K562 (cell line): ENCODE measurements at regions of chr3 and their contacts with region 1.

Region 1: DNA sequence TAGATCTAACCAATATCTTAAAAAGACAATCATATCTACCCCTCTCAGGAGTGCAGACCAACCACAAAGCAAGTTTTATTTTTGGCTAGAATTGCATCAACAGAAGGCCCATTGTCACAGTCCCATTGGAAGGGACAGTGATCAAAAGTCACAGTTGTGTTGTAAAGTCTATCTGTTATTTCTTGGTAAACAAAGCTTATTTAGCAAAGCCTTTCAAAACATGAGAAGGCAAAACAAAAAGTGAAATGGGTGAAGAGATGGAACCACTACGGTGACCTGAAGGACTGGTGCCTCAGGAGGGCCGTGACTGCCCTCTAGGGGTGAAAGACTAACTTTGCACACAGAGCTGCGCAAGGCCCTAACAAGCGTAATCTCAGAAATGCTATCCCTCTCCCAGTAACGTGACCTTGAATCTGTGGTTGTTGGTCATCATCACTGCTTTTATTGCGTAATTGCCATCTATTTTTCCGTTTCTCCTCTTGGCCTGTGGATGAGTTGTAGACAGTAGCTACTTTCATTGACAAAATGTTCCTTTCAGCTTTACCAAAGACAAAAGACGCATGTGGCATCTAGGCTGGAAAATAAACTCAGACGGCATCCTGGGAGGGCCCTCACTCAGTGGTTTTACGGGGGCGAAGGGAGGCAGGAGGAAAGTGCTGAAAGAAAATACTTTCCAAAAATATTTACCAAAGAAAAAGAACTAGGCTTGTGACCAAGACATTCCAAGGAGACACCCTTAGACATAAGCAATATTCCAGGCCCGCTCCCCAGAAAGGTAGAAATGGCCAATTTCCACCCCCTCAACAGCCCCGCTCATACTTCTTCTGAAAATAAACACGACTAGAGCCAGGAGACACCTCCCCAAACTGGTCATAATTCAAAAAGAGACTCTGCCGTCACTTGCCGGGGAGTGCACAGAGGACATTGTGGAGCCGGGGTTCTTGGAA is 79.4 kb downstream of the FRMD4B start:
- DNase-seq: peak; percentile 42 to 70 (median 67)
- ATAC-seq: peak; percentile 97
- H3K4me3 ChIP-seq: no peak overlapping the region
- H3K27ac ChIP-seq: no peak overlapping the region
- H3K4me1 ChIP-seq: no peaks in the 10 kb centered on the region
- H3K27me3 ChIP-seq: peaks cover 3 to 5% of the 10 kb centered on the region in 2 experiments; a peak in 2 of 5 replicates
- CTCF ChIP-seq: peak; percentile 70 to 81 (median 78)
- EP300 ChIP-seq: no peak
- POLR2A ChIP-seq: no peak
- RAD21 ChIP-seq: peak; percentile 83 to 85

Region 2: DNA sequence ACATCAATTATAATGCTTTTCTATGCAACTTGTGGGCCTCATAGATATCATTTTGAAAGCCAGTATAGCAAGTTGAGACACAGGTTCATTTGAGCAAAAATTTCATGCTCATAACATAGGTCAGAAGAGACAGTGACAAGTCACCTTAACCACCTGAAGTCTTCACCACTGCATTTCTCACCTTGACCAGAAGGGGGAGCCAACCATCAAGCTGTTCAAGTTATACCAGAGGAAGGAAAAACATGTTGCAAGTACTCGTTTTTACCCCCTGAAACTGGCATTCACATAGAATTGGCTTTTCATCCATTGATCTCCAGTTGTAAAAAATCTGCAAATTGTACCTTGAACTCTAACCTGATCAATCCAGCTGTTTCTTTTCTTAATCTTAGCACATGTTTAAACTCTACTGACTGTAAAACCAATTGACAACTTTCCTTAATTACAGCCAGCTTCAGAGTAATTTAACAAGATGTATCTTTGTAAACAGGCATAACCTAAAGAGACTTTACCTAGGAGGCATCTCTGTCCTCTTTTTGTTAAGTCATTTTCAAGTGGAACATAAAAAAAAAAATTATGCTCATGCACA is 185.5 kb before region 1 on chr3:
- CTCF ChIA-PET with region 1: interaction called, 5 read pairs
- POLR2A ChIA-PET with region 1: no interaction called
- in situ Hi-C with region 1: no loop called
- intact Hi-C with region 1: loop called (anchors 2 kb)
- DNase-seq: peak; percentile 37 to 80 (median 47)
- ATAC-seq: peak; percentile 81
- H3K4me3 ChIP-seq: no peak overlapping the region
- H3K27ac ChIP-seq: no peak overlapping the region
- H3K4me1 ChIP-seq: no peaks in the 10 kb centered on the region; a peak in 1 of 5 replicates
- H3K27me3 ChIP-seq: no peaks in the 10 kb centered on the region
- CTCF ChIP-seq: peak; percentile 61 to 77 (median 75)
- EP300 ChIP-seq: no peak
- POLR2A ChIP-seq: no peak
- RAD21 ChIP-seq: peak; percentile 72 to 82

Region 3: DNA sequence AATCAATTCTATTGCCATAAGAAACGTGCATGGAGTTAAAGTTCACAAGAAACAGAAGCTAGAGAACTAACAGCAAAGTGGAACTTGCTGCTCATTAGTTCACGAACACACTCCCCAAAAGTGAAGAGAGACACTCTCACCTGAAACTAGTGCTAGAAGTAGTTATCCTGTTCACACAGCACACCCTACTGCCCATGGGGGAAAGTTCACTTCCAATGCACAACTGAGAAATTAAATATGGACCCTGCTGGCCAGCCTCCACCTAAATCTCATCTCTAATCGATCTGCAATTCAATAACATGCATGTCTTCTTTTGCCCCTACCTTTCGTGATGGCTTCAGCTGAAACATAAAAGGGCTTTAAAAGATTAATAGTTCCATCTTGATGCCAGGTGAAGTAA is 118.7 kb after region 1 on chr3:
- CTCF ChIA-PET with region 1: no interaction called
- POLR2A ChIA-PET with region 1: no interaction called
- in situ Hi-C with region 1: no loop called
- intact Hi-C with region 1: loop called (anchors 5 kb)
- DNase-seq: peak in 3 of 4 experiments; percentile 4 to 18 (median 13)
- ATAC-seq: peak; percentile 76
- H3K4me3 ChIP-seq: no peak overlapping the region
- H3K27ac ChIP-seq: no peak overlapping the region
- H3K4me1 ChIP-seq: no peaks in the 10 kb centered on the region
- H3K27me3 ChIP-seq: peaks cover 0 to 5% of the 10 kb centered on the region in 2 experiments; a peak in 2 of 5 replicates
- CTCF ChIP-seq: peak; percentile 43 to 58 (median 55); a peak in 5 of 6 replicates
- EP300 ChIP-seq: no peak
- POLR2A ChIP-seq: no peak
- RAD21 ChIP-seq: peak; percentile 27 to 60; a peak in 3 of 4 replicates

Region 4: GRCh38 chr3:69671082-69671952 is 364.8 kb after region 1 on chr3:
- CTCF ChIA-PET with region 1: no interaction called
- POLR2A ChIA-PET with region 1: no interaction called
- in situ Hi-C with region 1: no loop called
- intact Hi-C with region 1: loop called (anchors 5 kb)
- DNase-seq: peak; percentile 22 to 50 (median 35)
- ATAC-seq: peak; percentile 56; the same call in 2 of the 3 replicates
- H3K4me3 ChIP-seq: no peak overlapping the region
- H3K27ac ChIP-seq: no peak overlapping the region
- H3K4me1 ChIP-seq: no peaks in the 10 kb centered on the region; a peak in 1 of 5 replicates
- H3K27me3 ChIP-seq: no peaks in the 10 kb centered on the region
- CTCF ChIP-seq: peak; percentile 29 to 77 (median 50); a peak in 5 of 6 replicates
- EP300 ChIP-seq: no peak
- POLR2A ChIP-seq: no peak
- RAD21 ChIP-seq: peak; percentile 73 to 75

Region 5: GRCh38 chr3:70249509-70250160 is 943.1 kb after region 1 on chr3:
- CTCF ChIA-PET with region 1: no interaction called
- POLR2A ChIA-PET with region 1: no interaction called
- in situ Hi-C with region 1: no loop called
- intact Hi-C with region 1: no loop called
- DNase-seq: no peak
- ATAC-seq: no peak
- H3K4me3 ChIP-seq: no peak overlapping the region
- H3K27ac ChIP-seq: no peak overlapping the region
- H3K4me1 ChIP-seq: no peaks in the 10 kb centered on the region
- H3K27me3 ChIP-seq: no peaks in the 10 kb centered on the region
- CTCF ChIP-seq: no peak
- EP300 ChIP-seq: no peak
- POLR2A ChIP-seq: no peak
- RAD21 ChIP-seq: no peak